Activated naive CD4-positive, alpha-beta T cell treated with anti-CD3 and anti-CD28 coated beads for 36 hours (primary cell): ENCODE measurements at regions of chr14 and their contacts with region 1.

Region 1: DNA sequence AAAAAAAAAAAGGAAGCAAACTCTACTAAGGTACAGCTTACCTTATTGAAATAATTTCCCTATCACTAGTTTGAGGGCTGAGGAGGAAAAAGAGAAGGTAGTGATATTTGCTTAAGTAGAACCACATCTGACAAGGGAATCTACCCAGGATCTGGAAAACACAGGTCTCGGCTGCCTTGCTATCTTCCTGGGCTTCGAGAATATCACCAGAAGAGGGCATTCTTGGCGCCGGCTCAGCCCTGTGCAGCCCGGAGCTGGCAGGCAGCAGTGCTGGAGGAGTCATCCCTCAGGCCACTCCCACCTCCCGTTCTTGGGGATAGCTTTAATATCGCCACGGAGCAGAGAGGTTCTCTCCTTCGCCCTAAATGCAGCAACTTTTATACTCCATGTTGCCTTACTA is 1181.2 kb downstream of the VRK1 start:
- DNase-seq: peak; percentile 96
- H3K4me3 Mint-ChIP-seq: peak overlapping the region; percentile 82
- H3K27ac Mint-ChIP-seq: peak overlapping the region; percentile 96
- H3K4me1 Mint-ChIP-seq: peaks cover 56% of the 10 kb centered on the region
- H3K27me3 Mint-ChIP-seq: no peaks in the 10 kb centered on the region

Region 2: DNA sequence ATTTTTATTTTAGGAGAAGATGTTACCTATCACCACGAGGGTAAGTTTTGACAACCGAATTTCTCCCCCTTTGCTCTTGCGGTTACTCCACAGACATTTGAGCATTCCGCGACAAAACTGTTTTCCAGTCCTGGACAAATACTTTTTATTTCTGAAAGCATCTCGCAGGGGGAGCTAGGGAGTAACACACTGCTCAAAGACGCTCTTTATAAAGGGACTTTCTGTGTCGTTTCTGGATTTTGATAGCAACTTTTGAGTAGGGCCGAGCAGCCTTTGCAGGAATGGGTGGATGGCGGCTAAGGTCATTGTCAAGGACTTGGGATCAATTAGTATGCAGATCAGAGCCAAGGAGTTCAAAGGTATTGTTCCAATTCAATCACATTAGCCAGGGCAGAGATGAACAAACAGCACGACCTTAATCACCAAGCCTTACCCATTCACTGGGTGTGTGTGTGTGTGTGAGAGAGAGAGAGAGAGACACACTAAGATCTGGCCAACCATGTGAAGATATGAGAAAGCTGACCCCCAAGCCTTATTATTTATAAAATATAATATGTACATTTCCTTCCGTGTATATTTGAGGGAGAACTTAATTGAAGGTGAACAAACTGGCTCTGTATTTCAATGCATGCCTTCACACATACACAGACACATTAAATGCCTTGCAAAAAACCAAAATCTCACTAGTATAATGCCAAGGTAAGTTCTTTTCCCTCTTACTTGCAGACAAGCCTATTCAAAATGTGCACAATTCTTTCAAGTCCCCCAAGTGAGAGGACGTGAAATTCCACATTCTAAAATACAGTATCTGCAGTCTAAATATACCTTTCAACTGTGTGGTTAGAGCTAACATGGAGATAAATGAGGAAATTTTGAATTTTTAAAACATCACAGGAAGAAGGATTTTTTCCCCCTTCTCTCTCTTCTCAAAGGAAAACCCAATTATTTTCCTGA is 567.4 kb before region 1 on chr14:
- CTCF ChIA-PET with region 1: no interaction called
- intact Hi-C with region 1: loop called (anchors 5 kb)
- DNase-seq: no peak
- H3K4me3 Mint-ChIP-seq: no peak overlapping the region
- H3K27ac Mint-ChIP-seq: no peak overlapping the region
- H3K4me1 Mint-ChIP-seq: peaks cover 29% of the 10 kb centered on the region
- H3K27me3 Mint-ChIP-seq: peaks cover 9% of the 10 kb centered on the region

Region 3: DNA sequence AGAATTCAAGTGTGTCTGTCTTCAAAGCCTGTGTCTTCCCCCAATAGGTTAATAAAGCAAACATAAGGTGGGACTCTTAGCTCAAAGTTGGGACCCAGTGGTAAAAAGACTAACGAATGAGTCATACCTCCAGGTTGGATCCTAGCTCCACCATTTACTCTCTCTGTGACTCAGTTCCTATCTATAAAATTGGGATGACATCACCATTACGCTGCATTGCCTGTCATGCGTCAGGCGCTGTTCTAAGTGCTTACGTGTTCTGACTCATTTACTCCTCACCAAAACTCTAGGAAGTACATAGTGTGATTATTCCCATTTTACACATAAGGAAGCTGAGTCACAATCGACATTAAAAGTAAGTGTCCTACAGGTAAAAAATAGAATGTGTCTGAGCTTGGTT is 265.3 kb before region 1 on chr14:
- CTCF ChIA-PET with region 1: no interaction called
- intact Hi-C with region 1: loop called (anchors 2 kb)
- DNase-seq: peak; percentile 75
- H3K4me3 Mint-ChIP-seq: no peak overlapping the region
- H3K27ac Mint-ChIP-seq: peak overlapping the region; percentile 86
- H3K4me1 Mint-ChIP-seq: peaks cover 56% of the 10 kb centered on the region
- H3K27me3 Mint-ChIP-seq: no peaks in the 10 kb centered on the region

Region 4: DNA sequence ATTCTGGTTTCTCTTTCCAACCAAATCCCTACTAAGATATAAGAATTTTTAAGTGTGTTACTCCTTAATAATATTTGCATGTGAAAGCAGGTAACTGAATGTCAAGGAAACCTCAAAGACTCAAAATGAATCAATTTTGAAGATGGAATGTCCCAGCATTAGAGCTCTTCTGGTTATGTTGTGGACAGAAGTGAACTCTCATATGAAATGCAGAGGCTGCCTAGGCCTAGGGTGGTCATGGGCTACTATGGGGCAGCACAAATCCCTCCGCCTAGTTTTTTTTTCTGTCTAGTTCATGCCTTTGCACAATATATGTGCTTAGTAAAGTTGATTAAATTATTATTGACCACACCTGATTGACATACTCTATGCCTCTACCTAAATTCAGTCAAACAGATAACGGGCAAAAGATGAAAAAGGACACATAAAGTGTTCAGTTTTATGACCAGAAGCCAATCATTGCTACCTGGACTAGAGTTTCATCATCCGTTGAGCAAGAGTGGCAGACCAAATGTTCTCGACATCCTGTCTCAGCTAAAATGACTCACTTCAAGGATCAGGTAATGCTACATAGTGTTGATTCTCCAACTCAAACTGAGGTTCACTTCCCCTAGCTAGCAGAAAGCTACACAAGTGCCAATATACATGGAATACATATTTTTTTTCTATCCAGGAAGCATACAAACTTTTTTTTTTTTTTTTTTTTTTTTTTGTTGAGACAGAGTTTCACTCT is 30.2 kb after region 1 on chr14:
- CTCF ChIA-PET with region 1: interaction called, 4 read pairs
- intact Hi-C with region 1: loop called (anchors 2 kb)
- DNase-seq: peak; percentile 65
- H3K4me3 Mint-ChIP-seq: no peak overlapping the region
- H3K27ac Mint-ChIP-seq: peak overlapping the region; percentile 96
- H3K4me1 Mint-ChIP-seq: peaks cover 62% of the 10 kb centered on the region
- H3K27me3 Mint-ChIP-seq: no peaks in the 10 kb centered on the region

Region 5: DNA sequence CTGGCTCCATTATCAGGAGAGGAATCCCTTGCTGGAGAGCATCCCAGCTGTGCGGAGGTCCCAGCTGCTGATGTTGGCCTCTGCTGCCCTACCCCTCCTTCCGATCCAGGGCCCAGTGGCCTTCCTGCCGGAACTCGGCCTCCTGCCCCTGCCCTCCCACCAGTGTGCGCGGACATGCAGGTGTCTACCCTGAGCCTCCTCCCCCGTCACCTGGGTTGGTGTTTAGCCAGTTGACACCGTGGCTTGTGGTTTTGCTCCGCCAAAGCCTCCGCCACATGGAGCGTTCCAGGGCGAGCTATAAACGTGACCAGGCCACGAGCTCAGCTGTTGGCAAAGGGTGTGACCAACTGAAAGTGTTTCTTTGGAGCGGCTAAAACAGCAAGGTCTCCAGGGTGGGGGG is 189.4 kb after region 1 on chr14:
- CTCF ChIA-PET with region 1: interaction called, 5 read pairs
- intact Hi-C with region 1: loop called (anchors 2 kb)
- DNase-seq: peak; percentile 65
- H3K4me3 Mint-ChIP-seq: peak overlapping the region; percentile 56
- H3K27ac Mint-ChIP-seq: peak overlapping the region; percentile 98
- H3K4me1 Mint-ChIP-seq: peaks cover 93% of the 10 kb centered on the region
- H3K27me3 Mint-ChIP-seq: no peaks in the 10 kb centered on the region

Region 6: GRCh38 chr14:98203421-98203820 is 225.1 kb after region 1 on chr14:
- CTCF ChIA-PET with region 1: no interaction called
- intact Hi-C with region 1: no loop called
- DNase-seq: no peak
- H3K4me3 Mint-ChIP-seq: peak overlapping the region; percentile 60
- H3K27ac Mint-ChIP-seq: peak overlapping the region; percentile 89
- H3K4me1 Mint-ChIP-seq: peaks cover 84% of the 10 kb centered on the region
- H3K27me3 Mint-ChIP-seq: no peaks in the 10 kb centered on the region

Region 7: DNA sequence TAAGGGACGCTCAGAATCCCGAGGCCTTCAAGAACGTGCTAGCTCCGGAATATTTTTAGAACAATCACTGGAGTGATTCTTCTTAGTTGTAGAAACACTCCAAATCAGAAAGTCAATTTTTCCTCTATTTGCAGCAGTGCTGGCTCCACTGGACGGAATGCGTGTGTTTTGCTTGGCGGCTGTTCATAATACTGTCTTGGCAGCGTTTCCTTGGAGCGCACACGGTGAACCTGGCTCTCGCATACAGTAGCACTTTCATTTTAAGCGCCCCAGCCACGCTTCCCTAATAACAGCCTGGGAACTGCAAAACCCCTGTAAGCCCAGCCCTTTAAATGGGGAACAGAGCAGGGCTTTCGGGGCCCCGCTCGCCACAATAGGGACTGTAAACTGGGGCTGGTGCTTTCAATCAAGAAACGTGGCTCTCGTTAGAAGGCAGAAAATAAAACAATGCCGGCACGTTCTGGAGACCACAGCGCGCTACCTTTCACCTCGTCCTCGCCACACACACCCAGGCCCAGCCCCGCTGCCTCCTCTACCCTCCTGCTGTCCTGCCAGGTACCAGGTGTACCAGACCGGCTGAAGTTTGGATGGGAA is 1213.8 kb after region 1 on chr14:
- CTCF ChIA-PET with region 1: no interaction called
- intact Hi-C with region 1: loop called (anchors 5 kb)
- DNase-seq: peak; percentile 59
- H3K4me3 Mint-ChIP-seq: peak overlapping the region; percentile 77
- H3K27ac Mint-ChIP-seq: peak overlapping the region; percentile 95
- H3K4me1 Mint-ChIP-seq: peaks cover 81% of the 10 kb centered on the region
- H3K27me3 Mint-ChIP-seq: no peaks in the 10 kb centered on the region